GM12878 (cell line): ENCODE measurements at regions of chr3 and their contacts with region 1.

Region 1: GRCh38 chr3:23785097-23785645 is 20.6 kb upstream of the UBE2E1 start:
- DNase-seq: no peak
- ATAC-seq: no peak
- H3K4me3 ChIP-seq: no peak overlapping the region
- H3K27ac ChIP-seq: no peak overlapping the region
- H3K4me1 ChIP-seq: no peaks in the 10 kb centered on the region
- H3K27me3 ChIP-seq: no peaks in the 10 kb centered on the region
- CTCF ChIP-seq: no peak
- EP300 ChIP-seq: no peak
- POLR2A ChIP-seq: no peak
- RAD21 ChIP-seq: no peak

Region 2: DNA sequence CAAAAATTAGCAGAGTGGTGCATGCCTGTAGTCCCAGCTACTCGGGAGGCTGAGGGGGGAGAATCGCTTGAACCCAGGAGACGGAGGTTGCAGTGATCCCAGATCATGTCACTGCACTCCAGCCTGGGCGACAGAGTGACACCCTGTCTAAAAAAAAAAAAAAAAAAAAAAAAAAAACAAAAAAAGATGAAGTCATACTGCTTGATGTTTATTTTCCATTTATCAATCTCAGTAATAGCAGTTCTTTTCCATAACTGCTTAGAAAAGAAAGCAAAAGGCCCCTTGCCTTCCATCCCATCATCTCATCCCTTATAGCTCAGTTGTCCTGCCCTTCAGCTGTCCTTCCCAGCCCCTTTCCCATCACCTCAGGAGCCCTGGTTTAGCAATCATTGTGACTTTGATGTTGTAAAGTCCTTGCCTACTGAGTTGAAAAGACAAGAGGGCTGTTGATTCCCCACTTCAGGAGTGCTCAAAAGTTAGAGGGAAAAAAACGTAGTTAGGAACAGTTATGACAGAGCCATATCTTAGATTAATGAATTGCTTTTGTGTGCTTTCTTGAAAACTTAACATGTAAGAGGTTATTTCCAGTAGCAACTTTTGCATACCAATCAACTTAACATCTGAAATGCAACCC is 727.5 kb after region 1 on chr3:
- CTCF ChIA-PET with region 1: no interaction called
- POLR2A ChIA-PET with region 1: interaction called, 10 read pairs
- RAD21 ChIA-PET with region 1: no interaction called
- SMC1A ChIA-PET with region 1: no interaction called
- in situ Hi-C with region 1: no loop called
- intact Hi-C with region 1: no loop called
- DNase-seq: no peak
- ATAC-seq: no peak
- H3K4me3 ChIP-seq: no peak overlapping the region
- H3K27ac ChIP-seq: no peak overlapping the region
- H3K4me1 ChIP-seq: no peaks in the 10 kb centered on the region
- H3K27me3 ChIP-seq: no peaks in the 10 kb centered on the region; a peak in 2 of 4 replicates
- CTCF ChIP-seq: no peak
- EP300 ChIP-seq: no peak
- POLR2A ChIP-seq: no peak
- RAD21 ChIP-seq: no peak